Heart left ventricle (tissue), 16 donors: ENCODE measurements at regions of chr16 and their contacts with region 1.

Region 1: DNA sequence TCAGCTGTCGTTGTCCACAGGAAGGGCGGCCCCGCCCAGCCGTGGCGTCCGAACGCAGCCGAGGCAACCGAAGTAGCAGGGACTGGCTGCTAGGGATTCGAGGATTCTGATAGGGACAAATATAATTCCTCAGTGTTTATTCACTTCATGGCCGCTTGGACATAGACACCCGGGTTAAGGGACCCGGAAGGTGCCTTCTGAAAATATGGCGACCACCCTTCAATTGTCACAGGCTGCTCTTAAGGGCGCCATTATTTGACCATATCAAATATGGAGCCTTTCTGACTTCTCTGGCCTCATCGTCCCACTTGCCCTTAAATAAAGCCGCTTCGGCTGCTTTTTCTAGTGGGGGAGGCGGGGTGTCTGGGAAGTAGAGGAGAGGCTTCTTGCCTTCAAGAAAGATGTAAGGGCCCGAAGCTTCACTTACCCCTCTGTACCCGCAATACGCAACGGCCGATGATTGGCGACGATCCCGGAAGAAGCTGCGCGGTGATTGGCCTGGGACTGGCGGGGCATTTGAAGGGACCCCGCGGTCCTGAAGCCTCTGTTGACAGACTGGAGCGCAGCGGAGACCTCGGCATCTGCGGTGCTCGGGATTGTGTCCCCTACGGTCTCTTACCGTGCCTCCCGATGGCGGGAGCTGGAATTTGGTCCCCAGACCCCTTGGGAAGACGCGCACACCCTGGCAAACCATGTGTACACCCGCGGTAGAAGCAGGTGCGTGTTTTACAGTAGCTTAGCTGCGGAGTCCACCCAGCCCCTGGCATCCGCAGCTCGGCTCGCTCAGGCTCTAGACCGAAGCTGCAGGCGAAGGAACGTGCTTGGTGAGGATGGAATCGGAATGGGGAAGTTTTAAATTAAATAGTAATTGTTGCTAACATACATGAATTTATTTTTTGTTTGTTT is at the start of gene ZNF688:
- DNase-seq: peak; percentile 95 to 96 (median 96)
- ATAC-seq: peak; percentile 90 to 95 (median 92)
- H3K4me3 ChIP-seq: peak within 1 kb of the TSS; percentile 49 to 99 (median 83)
- H3K27ac ChIP-seq: peak within 1 kb of the TSS; percentile 88 to 100 (median 98)
- H3K4me1 ChIP-seq: peaks cover 3 to 41% (median 20%) of the 10 kb centered on the region in 12 donors
- H3K27me3 ChIP-seq: no peaks in the 10 kb centered on the region
- CTCF ChIP-seq: no peak
- POLR2A ChIP-seq: peak in 1 of 2 donors; percentile 44
- total RNA-seq, gene ZNF688: 10.0 to 14.3 (median 11.6) TPM

Region 2: GRCh38 chr16:30526823-30527635 is 44.9 kb before region 1 on chr16:
- intact Hi-C with region 1: loop called in 5 of 10 experiments (anchors 5 kb)
- DNase-seq: peak; percentile 99 to 100 (median 99)
- ATAC-seq: peak; percentile 93 to 97 (median 94)
- H3K4me3 ChIP-seq: peak overlapping the region; percentile 35 to 98 (median 86)
- H3K27ac ChIP-seq: peak overlapping the region; percentile 95 to 100 (median 99)
- H3K4me1 ChIP-seq: peaks cover 0 to 44% (median 19%) of the 10 kb centered on the region in 12 donors
- H3K27me3 ChIP-seq: no peaks in the 10 kb centered on the region
- CTCF ChIP-seq: peak in 10 of 12 donors; percentile 5 to 53 (median 28)
- POLR2A ChIP-seq: peak; percentile 38 to 86

Region 3: DNA sequence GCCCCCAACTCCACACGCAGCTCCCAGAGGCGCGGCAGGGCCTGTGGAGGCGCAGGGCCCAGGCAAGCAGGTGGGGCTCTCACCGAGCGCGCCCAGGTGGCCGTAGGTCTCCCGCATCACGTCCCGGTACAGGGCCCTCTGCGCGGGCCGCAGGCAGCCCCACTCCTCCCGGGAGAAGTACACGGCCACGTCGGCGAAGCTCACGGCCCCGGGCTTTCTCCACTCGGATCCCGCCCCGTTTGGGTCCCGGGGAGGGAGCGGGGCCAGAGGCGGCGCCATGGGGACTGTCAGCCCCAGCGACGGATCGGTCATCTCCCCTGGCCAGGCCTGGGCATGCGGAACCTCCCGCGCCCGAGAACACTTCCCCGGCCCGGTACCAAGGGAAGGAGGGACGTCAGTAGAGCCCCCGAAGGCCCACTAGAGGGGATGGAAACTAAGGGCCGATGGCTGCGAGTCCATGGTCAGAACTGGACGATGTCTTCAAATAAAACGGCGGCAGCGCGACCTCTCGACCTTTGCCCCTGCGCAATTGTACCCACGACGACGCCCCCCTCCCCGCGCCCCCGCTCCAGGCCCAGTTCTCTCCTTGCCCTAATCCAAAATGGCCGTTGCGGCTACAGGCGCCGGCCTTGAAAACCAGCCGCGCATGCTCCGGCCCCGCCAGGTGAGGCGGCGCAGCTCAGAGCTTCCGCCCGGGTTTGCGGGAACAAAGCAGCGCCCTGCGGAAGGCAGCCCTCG is 37.4 kb before region 1 on chr16 and contains the start of gene ZNF747:
- intact Hi-C with region 1: loop called in 7 of 10 experiments (anchors 1 to 5 kb)
- DNase-seq: peak; percentile 95 to 96 (median 96)
- ATAC-seq: peak; percentile 88 to 95 (median 90)
- H3K4me3 ChIP-seq: peak within 1 kb of the TSS; percentile 31 to 94 (median 82)
- H3K27ac ChIP-seq: peak within 1 kb of the TSS; percentile 86 to 99 (median 94)
- H3K4me1 ChIP-seq: peaks cover 0 to 34% (median 21%) of the 10 kb centered on the region in 12 donors
- H3K27me3 ChIP-seq: no peaks in the 10 kb centered on the region
- CTCF ChIP-seq: peak in 2 of 12 donors; percentile 12 to 13
- POLR2A ChIP-seq: peak in 1 of 2 donors; percentile 63
- total RNA-seq, gene ZNF747: 8.6 to 15.2 (median 10.5) TPM

Region 4: DNA sequence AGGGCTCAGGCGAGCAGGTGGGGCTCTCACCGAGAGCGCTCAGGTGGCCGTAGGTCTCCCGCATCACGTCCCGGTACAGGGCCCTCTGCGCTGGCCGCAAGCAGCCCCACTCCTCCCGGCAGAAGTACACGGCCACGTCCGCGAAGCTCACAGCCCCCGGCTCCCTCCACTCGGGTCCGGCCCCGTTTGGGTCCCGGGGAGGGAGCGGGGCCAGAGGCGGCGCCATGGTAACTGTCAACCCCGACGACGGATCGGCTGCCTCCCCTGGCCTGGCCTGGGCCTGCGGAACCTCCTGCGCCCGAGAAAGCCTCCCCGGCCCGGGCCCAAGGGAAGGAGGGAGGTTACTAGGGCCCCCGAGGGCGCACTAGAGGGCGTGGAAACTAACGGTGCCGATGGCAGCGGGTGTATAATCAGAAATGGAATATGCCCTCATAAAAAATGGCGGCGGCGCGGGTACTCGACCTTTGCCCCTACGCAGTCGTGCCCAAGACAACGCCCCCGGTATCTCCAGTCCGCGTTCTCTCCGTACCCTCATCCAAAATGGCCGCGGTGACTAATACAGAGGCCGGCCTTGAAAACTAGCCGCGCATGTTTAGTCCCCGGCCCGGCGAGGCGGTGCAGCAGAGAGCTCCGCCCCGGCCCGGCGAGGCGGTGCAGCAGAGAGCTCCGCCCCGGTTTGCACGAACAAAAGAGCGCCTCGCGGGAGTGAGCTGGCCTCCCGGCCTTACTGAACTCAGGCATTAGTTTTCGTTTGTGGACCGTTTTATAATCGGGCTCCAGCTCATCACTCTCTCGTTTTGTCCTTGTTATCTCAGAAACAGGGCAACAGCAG is 13.8 kb before region 1 on chr16 and contains the start of gene ZNF764:
- intact Hi-C with region 1: loop called in 1 of 10 experiments (anchors 2 kb)
- DNase-seq: peak; percentile 98 to 99 (median 98)
- ATAC-seq: peak; percentile 96 to 98 (median 98)
- H3K4me3 ChIP-seq: peak within 1 kb of the TSS; percentile 63 to 98 (median 77)
- H3K27ac ChIP-seq: peak within 1 kb of the TSS; percentile 86 to 99 (median 94)
- H3K4me1 ChIP-seq: peaks cover 0 to 67% (median 31%) of the 10 kb centered on the region in 12 donors
- H3K27me3 ChIP-seq: no peaks in the 10 kb centered on the region
- CTCF ChIP-seq: peak in 2 of 12 donors; percentile 6 to 20
- POLR2A ChIP-seq: peak in 1 of 2 donors; percentile 58
- total RNA-seq, gene ZNF764: 8.5 to 17.2 (median 12.3) TPM

Region 5: DNA sequence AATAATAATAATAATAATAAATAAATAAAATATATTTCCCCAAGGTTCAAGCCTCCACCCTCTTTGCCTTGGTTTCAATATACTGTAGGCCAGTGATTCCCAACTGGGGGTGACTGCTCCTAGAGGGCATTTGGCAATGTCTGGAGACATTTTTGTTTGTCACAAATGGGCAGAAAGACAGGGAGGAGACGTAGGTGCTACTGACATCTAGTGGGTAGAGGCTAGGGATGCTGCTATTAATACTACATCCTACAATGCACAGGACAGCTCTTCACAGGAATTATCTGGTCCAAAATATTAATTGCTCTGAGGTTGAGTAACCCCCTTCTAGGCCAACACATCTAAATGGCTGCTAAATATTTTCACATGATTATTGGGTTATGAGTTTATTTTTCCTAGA is 66.0 kb after region 1 on chr16:
- intact Hi-C with region 1: loop called in 2 of 10 experiments (anchors 5 kb)
- DNase-seq: no peak
- ATAC-seq: no peak
- H3K4me3 ChIP-seq: no peak overlapping the region
- H3K27ac ChIP-seq: no peak overlapping the region
- H3K4me1 ChIP-seq: peaks cover 0 to 19% (median 9%) of the 10 kb centered on the region in 12 donors
- H3K27me3 ChIP-seq: no peaks in the 10 kb centered on the region
- CTCF ChIP-seq: peak in 5 of 12 donors; percentile 17 to 32 (median 28)
- POLR2A ChIP-seq: no peak

Region 6: GRCh38 chr16:30650369-30651123 is 78.6 kb after region 1 on chr16 and contains the start of gene PRR14:
- intact Hi-C with region 1: loop called in 1 of 10 experiments (anchors 5 kb)
- DNase-seq: peak; percentile 100
- ATAC-seq: peak; percentile 92 to 95 (median 93)
- H3K4me3 ChIP-seq: peak within 1 kb of the TSS; percentile 60 to 93 (median 76)
- H3K27ac ChIP-seq: peak within 1 kb of the TSS; percentile 69 to 99 (median 95)
- H3K4me1 ChIP-seq: peaks cover 0 to 26% (median 14%) of the 10 kb centered on the region in 12 donors
- H3K27me3 ChIP-seq: no peaks in the 10 kb centered on the region
- CTCF ChIP-seq: peak in 10 of 12 donors; percentile 19 to 54 (median 34)
- POLR2A ChIP-seq: peak in 1 of 2 donors; percentile 32
- total RNA-seq, gene PRR14: 12.3 to 26.6 (median 20.2) TPM